GM12878 (cell line): ENCODE measurements at regions of chr22 and their contacts with region 1.

Region 1: DNA sequence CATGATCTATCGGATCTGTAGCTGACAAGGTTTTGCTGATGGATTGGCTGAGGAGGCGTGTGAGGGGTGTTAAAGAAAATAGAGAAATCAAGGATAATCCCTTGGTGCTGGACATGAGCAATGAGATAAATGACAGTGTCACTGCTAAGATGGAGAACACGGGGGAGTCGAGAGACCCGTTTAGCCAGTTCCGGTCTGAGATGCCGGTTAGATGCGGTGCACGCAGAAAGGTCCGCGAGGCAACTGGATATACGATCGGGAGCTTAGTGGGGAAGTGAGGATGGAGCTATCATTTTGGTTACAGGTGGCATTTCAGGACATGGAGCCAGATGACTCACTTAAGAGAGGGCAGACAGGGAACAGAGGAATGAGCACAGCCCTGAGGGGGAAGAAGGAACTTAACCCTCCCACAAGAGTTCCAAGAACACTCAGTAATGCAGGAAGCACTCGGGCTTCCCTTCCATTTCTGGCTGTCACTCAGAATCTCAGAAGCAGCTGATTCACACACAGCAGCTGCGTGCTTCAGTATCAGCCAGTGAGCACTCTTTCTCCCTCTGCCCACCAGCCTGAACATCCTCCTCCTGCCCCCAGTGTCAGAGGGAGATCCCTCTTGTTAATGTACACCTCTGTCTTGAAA is 34.9 kb downstream of the EFCAB6 start:
- DNase-seq: no peak
- ATAC-seq: no peak
- H3K4me3 ChIP-seq: no peak overlapping the region
- H3K27ac ChIP-seq: no peak overlapping the region
- H3K4me1 ChIP-seq: no peaks in the 10 kb centered on the region
- H3K27me3 ChIP-seq: no peaks in the 10 kb centered on the region
- CTCF ChIP-seq: no peak
- EP300 ChIP-seq: no peak
- POLR2A ChIP-seq: no peak
- RAD21 ChIP-seq: no peak

Region 2: DNA sequence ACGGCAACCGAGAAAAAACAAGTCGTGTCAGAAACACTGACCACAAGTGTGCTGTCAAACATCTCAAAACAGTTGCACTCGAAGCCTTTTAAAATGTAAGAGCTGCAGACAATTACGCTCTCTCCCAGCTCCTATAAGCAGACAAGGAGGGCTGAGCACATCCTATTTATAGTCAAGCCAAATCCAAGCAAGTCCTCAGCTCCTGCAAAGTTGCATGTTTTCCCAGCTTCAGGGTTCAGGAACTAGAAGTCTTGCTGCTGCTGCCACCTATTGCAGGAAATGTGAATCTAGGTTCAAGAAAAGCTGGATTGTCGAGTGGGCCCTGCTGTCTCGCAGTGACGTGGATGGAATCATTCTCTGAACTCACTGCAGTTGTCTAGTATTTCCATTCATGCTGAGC is 19.4 kb after region 1 on chr22:
- CTCF ChIA-PET with region 1: interaction called, 11 read pairs
- POLR2A ChIA-PET with region 1: no interaction called
- RAD21 ChIA-PET with region 1: no interaction called
- SMC1A ChIA-PET with region 1: no interaction called
- in situ Hi-C with region 1: no loop called
- intact Hi-C with region 1: no loop called
- DNase-seq: no peak
- ATAC-seq: no peak
- H3K4me3 ChIP-seq: no peak overlapping the region
- H3K27ac ChIP-seq: no peak overlapping the region
- H3K4me1 ChIP-seq: peaks cover 13% of the 10 kb centered on the region
- H3K27me3 ChIP-seq: no peaks in the 10 kb centered on the region
- CTCF ChIP-seq: peak; percentile 12 to 44 (median 22); a peak in 4 of 6 replicates
- EP300 ChIP-seq: no peak
- POLR2A ChIP-seq: no peak
- RAD21 ChIP-seq: peak; percentile 25; the same call in 1 of the 2 replicates